CD4-positive, alpha-beta T cell (primary cell): ENCODE measurements at regions of chrX and their contacts with region 1.

Region 1: DNA sequence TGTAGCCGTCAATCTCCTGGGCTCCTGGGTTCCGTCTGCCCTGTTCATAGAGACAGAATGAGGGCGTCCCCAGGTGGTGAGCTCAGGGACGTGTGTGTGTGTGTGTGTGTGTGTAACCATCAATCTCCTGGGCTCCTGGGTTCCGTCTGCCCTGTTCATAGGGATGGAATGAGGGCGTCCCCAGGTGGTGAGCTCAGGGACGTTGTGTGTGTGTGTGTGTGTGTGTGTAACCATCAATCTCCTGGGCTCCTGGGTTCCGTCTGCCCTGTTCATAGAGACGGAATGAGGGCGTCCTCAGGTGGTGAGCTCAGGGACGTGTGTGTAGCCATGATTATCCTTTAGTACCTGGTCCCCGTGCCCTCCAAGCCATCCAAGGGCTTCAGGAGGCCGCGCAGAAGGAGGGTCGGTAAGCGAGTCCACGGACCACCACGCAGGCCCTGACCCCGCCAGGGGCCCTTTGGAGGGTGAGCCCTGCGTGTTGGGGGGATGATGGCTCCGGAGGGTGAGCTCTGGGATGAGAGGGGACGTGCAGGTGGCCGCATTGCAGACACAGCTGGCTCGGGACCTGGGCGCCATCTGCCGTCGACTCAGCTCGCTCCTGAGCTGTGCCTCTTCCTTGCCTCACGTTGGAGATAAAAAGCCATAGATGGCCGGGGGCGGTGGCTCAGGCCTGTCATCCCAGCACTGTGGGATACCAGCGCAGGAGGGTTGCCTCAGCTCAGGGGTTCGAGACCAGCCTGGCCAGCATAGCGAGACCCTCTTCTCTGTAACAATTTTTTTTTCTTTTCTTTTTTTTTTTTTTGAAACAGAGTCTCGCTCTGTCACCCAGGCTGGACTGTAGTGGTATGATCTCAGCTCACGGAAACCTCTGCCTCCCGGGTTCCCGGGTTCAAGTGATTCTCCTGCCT is 5.4 kb upstream of the GTPBP6 start:
- DNase-seq: peak in 6 of 14 experiments; percentile 27 to 82 (median 48)
- ATAC-seq: peak; percentile 14
- H3K4me3 ChIP-seq: peak overlapping the region; percentile 48
- H3K4me3 Mint-ChIP-seq: peak overlapping the region; percentile 40
- H3K27ac ChIP-seq: no peak overlapping the region
- H3K27ac Mint-ChIP-seq: peak overlapping the region; percentile 96
- H3K4me1 ChIP-seq: peaks cover 42% of the 10 kb centered on the region
- H3K4me1 Mint-ChIP-seq: peaks cover 36% of the 10 kb centered on the region
- H3K27me3 ChIP-seq: no peaks in the 10 kb centered on the region
- H3K27me3 Mint-ChIP-seq: peaks cover 4% of the 10 kb centered on the region
- CTCF ChIP-seq: peak; percentile 26

Region 2: DNA sequence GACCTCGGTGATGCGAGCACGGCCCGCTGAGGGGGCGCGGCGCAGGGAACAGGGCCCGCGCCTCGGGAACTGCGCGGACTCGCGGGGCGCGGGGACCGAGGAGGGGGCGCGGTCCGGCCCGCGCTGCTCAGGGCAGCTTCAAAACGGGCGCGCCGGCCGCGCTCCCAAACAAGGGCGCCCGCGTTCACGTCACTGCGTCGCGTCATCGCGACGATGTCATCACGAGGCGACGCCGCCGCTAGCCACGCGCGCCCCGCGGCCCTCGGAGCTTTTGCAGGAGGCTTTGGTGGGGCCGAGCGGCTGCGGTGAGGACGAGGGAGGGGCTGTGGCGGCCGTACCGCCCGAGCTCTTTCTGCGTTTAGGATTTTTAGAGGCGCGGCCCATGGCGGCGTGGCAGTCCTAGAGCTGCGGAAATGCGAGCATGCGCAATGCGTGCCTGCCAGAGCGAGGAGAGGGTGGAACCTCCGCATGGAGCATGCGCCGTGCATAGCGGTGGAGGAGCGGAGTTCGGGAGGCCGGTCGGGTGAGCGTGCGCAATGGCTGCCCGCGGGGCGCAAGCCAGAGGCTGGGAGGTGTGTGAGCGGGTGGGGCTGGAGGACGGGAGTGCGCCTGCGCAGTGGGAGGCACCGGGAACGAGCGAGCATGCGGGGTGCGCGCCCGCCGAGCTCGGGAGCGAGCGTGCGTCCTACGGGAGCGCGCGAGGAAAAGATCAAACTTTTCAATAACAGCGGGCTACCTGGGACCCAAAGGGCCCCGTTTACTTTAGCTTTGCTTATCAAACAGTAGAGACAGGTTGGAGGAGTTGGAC is 63.0 kb after region 1 on chrX and contains the start of gene PPP2R3B:
- CTCF ChIA-PET with region 1: no interaction called
- POLR2A ChIA-PET with region 1: no interaction called
- intact Hi-C with region 1: loop called (anchors 2 to 5 kb)
- DNase-seq: peak; percentile 95 to 100 (median 99)
- ATAC-seq: peak; percentile 93
- H3K4me3 ChIP-seq: peak within 1 kb of the TSS; percentile 82
- H3K4me3 Mint-ChIP-seq: peak within 1 kb of the TSS; percentile 87
- H3K27ac ChIP-seq: peak within 1 kb of the TSS; percentile 100
- H3K27ac Mint-ChIP-seq: peak within 1 kb of the TSS; percentile 94
- H3K4me1 ChIP-seq: peaks cover 16% of the 10 kb centered on the region
- H3K4me1 Mint-ChIP-seq: peaks cover 9% of the 10 kb centered on the region
- H3K27me3 ChIP-seq: no peaks in the 10 kb centered on the region
- H3K27me3 Mint-ChIP-seq: no peaks in the 10 kb centered on the region
- CTCF ChIP-seq: no peak
- total RNA-seq, gene PPP2R3B: 12.1 to 14.0 TPM

Region 3: DNA sequence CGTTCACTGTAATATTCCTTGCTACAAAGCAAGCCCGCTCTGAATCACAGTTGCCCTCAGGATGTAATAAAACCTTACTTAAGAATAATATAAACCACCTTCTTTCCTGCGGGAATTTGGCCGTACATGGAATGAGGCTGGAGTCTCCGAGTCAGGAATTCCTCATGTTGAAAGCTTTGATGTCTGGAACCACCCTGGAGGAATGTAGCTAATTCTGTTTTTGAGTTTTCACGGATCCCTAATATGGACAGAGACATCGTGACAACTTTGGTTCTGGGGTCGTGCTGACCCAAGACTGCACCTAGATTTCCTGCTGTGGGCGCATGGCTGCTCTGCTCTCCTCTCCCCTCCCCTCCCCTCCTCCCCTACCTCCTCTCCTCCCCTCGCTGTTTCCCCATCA is 830.0 kb after region 1 on chrX:
- CTCF ChIA-PET with region 1: no interaction called
- POLR2A ChIA-PET with region 1: no interaction called
- intact Hi-C with region 1: loop called in 1 of 2 experiments (anchors 10 kb)
- DNase-seq: no peak
- ATAC-seq: no peak
- H3K4me3 ChIP-seq: no peak overlapping the region
- H3K4me3 Mint-ChIP-seq: no peak overlapping the region
- H3K27ac ChIP-seq: no peak overlapping the region
- H3K27ac Mint-ChIP-seq: no peak overlapping the region
- H3K4me1 ChIP-seq: no peaks in the 10 kb centered on the region
- H3K4me1 Mint-ChIP-seq: no peaks in the 10 kb centered on the region
- H3K27me3 ChIP-seq: no peaks in the 10 kb centered on the region
- H3K27me3 Mint-ChIP-seq: peaks cover 5% of the 10 kb centered on the region
- CTCF ChIP-seq: no peak